KBM-7 (cell line): ENCODE measurements at regions of chr1 and their contacts with region 1.

Region 1: DNA sequence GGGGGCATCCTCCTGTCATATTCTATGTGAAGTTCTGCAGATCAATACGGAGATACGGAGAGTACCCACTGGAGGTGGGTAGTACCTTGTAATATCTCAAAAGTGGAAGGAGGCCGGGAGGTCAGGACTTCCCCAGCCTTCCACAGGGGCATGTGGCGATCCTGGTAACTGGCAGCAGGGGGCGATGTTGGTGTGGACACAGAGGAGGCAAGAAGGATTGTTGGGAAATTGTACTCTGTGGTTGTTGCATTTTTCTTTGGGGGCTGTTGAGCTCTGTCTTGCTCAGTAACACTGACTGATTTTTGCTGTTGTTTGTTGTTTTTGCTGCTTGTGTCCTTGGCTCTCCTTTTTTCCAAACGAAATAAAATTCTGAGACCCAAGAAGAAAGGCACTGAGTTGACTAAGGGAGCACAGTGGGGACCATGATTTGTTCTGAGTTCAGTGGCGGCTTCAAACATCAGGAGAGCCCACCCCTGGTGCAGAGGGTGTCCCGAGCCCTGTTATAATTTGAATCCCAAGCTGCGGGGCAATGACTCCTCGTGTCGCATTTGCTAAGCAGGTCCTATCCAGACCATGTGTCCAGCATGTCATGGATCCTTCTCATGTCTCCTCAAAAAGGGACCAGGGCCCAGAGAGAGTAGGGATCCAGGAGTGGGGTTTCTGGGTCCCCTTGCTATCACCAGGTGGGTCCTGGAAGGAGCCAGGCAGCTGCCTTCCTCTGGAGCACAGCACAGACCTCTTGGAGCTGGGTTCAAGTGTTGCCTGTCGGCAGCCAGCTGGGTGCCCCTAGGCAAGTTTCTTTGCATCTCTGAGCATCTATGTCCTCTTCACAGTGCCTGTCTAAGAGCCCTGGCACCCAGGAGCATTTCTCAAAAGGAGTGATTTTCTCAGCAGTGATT is 22.8 kb downstream of the LHX4 start:
- DNase-seq: peak; percentile 89

Region 2: DNA sequence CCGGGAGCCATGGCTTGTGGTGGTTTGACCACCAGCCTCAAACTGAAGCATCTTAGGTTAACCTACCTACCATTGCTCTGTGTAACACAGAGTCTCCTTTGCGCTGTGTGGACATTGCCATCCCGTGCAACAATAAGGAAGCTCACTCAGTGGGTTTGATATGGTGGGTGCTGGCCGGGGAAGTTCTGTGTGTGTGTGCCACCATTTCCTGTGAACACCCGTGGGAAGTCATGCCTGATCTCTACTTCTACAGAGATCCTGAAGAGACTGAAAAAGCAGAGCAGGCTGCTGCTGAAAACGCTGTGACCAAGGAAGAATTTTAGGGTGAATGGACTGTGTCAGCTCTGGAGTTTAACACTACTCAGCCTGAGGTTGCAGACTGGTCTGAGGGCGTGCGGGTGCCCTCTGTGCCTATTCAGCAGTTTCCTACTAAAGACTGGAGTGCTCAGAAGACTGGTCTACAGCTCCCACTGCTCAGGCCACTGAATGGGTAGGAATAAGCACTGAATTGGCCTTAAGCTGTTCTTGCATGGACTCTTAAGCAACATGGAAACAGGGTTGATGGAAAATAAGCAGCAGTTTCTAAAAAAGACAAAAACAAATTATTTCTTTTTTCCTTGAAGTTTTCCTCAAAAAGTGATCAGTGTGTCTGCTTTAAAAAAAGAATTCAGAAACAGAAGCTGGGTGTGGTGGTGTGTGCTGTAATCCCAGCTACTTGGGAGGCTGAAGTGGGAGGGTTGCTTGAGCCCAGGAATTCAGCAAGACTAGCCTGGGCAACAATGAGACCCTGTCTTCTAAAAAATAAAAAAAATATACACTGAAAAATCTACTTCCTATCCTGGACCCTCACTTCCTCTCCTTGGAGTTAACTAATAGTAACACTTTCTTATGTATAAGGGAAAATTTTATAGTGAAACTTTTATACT is 283.6 kb before region 1 on chr1:
- in situ Hi-C with region 1: no loop called
- DNase-seq: no peak

Region 3: DNA sequence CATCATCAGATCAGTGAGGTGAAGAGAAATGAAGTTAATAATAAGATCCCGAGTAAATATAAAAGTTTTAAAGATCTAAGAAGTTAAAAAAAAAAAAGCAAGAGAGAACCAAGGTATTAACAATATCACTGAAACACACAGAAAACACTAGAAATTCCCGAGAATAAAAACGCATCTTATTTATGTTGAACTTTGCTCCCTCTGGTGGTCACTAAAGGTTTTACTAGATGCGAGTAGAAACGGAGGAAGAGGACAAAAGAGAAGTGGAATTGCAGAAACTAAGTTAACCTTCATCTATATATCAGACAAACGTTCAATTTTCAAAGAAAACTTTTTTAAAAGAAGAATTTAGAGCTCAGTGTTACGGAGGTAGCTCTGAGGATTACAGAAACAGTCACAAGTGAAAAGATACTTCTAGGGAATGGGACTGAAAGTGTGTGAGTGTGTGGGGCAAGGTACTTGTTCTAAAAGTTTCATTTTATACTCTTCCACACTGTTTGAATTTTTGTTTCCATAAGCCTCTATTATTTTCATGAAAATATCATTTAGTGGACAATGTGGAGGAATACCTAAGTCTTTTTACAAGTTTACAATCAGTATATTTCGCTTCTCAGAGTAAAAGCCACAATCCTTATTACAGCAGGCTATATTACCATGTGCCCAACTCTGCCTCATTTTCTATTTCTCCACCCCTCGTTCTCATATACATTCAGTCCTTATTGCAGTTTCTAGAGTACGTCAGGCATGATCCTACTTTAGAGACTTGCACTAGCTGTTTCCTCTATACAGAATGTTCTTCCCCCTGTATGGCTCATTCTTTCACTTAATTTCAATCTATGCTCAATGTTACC is 229.8 kb after region 1 on chr1:
- in situ Hi-C with region 1: loop called (anchors 10 kb)
- DNase-seq: peak; percentile 71